ENCODE measurements at regions of chr3 and their contacts with region 1.

Region 1: DNA sequence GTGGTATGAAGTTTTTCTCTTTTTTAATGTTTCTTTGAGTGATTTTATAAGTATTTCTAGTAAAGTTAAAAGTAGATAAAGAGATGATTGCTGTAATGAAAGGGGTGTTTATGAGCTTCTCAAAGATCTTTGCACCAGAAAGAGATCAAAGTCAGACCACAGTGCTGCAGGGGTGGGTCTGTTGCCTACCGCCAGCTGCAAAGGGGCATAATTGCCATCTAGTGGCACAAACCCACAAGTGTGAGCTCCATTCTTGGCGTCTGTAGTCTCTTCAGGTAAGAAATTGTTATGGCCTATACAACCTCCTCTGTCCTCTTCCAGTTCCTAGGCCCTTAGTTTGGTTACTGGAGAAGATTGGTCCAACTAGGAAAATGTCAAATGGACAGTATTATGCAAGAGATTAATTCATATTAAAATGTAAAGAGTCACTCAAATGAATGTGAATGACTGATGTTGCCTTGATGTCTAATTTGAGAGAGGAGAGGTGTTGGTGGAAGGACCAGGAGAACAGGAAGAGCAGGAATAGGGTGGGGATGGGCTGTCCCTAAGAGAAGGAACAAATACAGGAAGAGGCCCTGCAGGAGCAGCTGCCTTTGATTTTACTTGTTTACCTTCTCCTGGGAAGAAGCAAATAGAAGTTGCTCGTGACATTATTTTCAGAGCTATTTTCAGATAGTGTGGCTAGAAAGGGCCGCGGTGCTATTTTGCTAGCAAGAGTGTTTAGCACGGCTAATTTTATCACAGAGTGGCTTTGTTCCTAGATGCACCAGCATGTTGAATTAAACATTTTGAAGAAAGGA is 53.0 kb upstream of the GSK3B start:
- DNase-seq: no peak
- ATAC-seq: peak; percentile 82
- H3K4me3 ChIP-seq: no peak overlapping the region
- H3K27ac ChIP-seq: no peak overlapping the region
- H3K4me1 ChIP-seq: peaks cover 10% of the 10 kb centered on the region
- H3K27me3 ChIP-seq: no peaks in the 10 kb centered on the region
- CTCF ChIP-seq: peak; percentile 37 to 42 (median 39); a peak in 5 of 6 replicates
- EP300 ChIP-seq: no peak
- POLR2A ChIP-seq: no peak
- RAD21 ChIP-seq: peak; percentile 73

Region 2: DNA sequence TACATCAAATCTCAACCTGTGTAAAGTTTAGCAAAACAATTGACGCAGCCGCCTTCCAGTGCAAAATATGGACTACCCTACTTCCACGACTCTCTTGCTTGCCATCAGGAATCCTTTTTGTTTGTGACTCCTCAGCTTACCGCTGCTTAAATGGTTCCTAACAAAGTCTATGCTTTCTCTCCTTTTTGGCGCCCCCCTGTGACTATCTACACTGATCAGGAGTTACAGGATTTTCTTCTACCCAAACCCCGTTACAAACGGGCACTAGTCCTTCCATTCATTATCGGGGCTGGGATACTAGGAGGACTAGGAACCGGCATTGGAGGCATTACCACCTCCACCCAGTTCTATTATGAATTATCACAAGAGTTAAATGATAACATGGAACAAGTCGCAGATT is 1296.6 kb before region 1 on chr3:
- CTCF ChIA-PET with region 1: no interaction called
- POLR2A ChIA-PET with region 1: no interaction called
- RAD21 ChIA-PET with region 1: no interaction called
- SMC1A ChIA-PET with region 1: no interaction called
- in situ Hi-C with region 1: no loop called
- intact Hi-C with region 1: no loop called
- DNase-seq: no peak
- ATAC-seq: no peak
- H3K4me3 ChIP-seq: no peak overlapping the region
- H3K27ac ChIP-seq: no peak overlapping the region
- H3K4me1 ChIP-seq: peaks cover 3% of the 10 kb centered on the region
- H3K27me3 ChIP-seq: no peaks in the 10 kb centered on the region
- CTCF ChIP-seq: no peak
- EP300 ChIP-seq: no peak
- POLR2A ChIP-seq: no peak
- RAD21 ChIP-seq: no peak

Region 3: DNA sequence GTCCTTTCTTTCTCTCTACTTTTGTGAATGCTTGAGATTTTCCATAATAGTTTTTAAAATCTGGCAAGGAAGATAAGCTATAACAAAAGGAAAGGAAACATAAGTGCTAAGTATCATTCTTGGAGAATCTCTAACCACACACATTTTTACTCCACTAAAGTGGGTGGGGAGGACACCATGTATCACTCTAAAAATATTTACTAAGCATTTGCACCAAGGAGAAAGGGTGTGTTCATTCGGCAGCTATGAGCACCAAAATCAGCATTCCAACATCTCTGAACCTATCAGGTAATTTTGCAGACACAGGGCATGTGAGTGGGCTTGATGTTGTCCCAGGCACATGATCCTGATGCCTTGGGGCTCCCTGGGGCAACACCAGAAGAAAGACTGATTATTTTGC is 912.1 kb before region 1 on chr3:
- CTCF ChIA-PET with region 1: no interaction called
- POLR2A ChIA-PET with region 1: no interaction called
- RAD21 ChIA-PET with region 1: no interaction called
- SMC1A ChIA-PET with region 1: no interaction called
- in situ Hi-C with region 1: no loop called
- intact Hi-C with region 1: no loop called
- DNase-seq: no peak
- ATAC-seq: no peak
- H3K4me3 ChIP-seq: no peak overlapping the region
- H3K27ac ChIP-seq: no peak overlapping the region
- H3K4me1 ChIP-seq: peaks cover 4% of the 10 kb centered on the region; the same call in 1 of the 2 replicates
- H3K27me3 ChIP-seq: no peaks in the 10 kb centered on the region
- CTCF ChIP-seq: no peak
- EP300 ChIP-seq: no peak
- POLR2A ChIP-seq: no peak
- RAD21 ChIP-seq: no peak

Region 4: DNA sequence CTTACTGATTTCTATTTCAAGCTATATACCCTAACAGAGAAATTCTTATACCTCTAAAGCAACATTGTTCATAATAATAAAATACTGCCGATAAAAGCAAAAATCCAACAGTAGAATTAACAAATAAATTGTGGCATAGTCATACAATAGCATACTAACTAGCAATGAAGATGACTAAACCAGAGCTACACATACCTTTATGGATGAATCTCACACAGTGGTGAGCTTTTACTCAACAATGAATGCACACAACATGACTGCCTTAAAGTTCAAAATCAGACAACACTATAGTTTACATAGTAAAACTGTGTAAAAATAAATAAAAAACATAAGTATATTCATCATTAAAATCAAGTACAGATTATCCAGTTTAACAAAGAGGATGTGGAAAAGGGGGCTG is 266.3 kb before region 1 on chr3:
- CTCF ChIA-PET with region 1: interaction called, 3 read pairs
- POLR2A ChIA-PET with region 1: no interaction called
- RAD21 ChIA-PET with region 1: no interaction called
- SMC1A ChIA-PET with region 1: interaction called, 12 read pairs
- in situ Hi-C with region 1: no loop called
- intact Hi-C with region 1: no loop called
- DNase-seq: no peak
- ATAC-seq: no peak
- H3K4me3 ChIP-seq: no peak overlapping the region
- H3K27ac ChIP-seq: no peak overlapping the region
- H3K4me1 ChIP-seq: no peaks in the 10 kb centered on the region
- H3K27me3 ChIP-seq: no peaks in the 10 kb centered on the region
- CTCF ChIP-seq: no peak
- EP300 ChIP-seq: no peak
- POLR2A ChIP-seq: no peak
- RAD21 ChIP-seq: no peak

Region 5: DNA sequence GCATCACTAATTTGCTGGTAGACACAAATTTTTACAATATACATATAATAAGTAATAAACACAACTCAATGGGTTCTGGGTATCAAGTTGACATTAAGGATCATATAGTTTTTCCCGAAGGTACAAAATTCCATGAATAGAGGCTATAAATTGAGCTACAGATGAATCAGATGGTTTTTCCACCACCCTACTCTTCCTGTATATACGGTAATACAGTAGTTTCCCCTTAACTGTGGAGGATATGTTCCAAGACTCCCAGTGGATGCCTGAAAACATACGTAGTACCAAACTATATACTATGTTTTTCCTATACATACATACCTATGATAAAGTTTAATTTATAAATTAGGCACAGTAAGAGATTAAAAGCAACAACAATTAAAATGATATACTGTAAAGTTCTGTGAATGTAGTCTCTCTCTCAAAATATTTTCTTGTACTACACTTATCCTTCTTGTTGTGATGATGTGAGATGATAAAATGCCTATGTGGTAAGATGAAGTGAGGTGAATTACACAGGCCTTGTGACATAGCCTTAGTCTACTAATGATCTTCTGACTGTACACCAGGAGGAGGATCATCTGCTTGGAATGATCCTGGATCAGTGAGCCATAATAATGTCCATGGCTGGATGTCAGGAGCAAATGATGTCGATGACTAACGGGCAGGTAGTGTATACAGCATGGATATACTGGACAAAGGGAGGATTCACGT is 248.6 kb before region 1 on chr3:
- CTCF ChIA-PET with region 1: interaction called, 66 read pairs
- POLR2A ChIA-PET with region 1: no interaction called
- RAD21 ChIA-PET with region 1: interaction called, 18 read pairs
- SMC1A ChIA-PET with region 1: interaction called, 81 read pairs
- in situ Hi-C with region 1: no loop called
- intact Hi-C with region 1: no loop called
- DNase-seq: no peak
- ATAC-seq: no peak
- H3K4me3 ChIP-seq: no peak overlapping the region
- H3K27ac ChIP-seq: no peak overlapping the region
- H3K4me1 ChIP-seq: no peaks in the 10 kb centered on the region
- H3K27me3 ChIP-seq: no peaks in the 10 kb centered on the region
- CTCF ChIP-seq: no peak
- EP300 ChIP-seq: no peak
- POLR2A ChIP-seq: no peak
- RAD21 ChIP-seq: no peak

Region 6: GRCh38 chr3:120057626-120058025 is 89.6 kb before region 1 on chr3:
- CTCF ChIA-PET with region 1: no interaction called
- POLR2A ChIA-PET with region 1: no interaction called
- RAD21 ChIA-PET with region 1: no interaction called
- SMC1A ChIA-PET with region 1: no interaction called
- in situ Hi-C with region 1: no loop called
- intact Hi-C with region 1: no loop called
- DNase-seq: no peak
- ATAC-seq: peak; percentile 67
- H3K4me3 ChIP-seq: no peak overlapping the region
- H3K27ac ChIP-seq: no peak overlapping the region
- H3K4me1 ChIP-seq: peaks cover 9% of the 10 kb centered on the region
- H3K27me3 ChIP-seq: no peaks in the 10 kb centered on the region
- CTCF ChIP-seq: no peak
- EP300 ChIP-seq: no peak
- POLR2A ChIP-seq: no peak
- RAD21 ChIP-seq: no peak